ENCODE measurements at regions of chr11 and their contacts with region 1.

Region 1: GRCh38 chr11:6067502-6067901 is 36.9 kb upstream of the OR56A1 start:
- DNase-seq: no peak
- H3K4me3 ChIP-seq: no peak overlapping the region
- H3K27ac ChIP-seq: no peak overlapping the region
- H3K4me1 ChIP-seq: no peaks in the 10 kb centered on the region
- H3K27me3 ChIP-seq: no peaks in the 10 kb centered on the region
- CTCF ChIP-seq: no peak

Region 2: DNA sequence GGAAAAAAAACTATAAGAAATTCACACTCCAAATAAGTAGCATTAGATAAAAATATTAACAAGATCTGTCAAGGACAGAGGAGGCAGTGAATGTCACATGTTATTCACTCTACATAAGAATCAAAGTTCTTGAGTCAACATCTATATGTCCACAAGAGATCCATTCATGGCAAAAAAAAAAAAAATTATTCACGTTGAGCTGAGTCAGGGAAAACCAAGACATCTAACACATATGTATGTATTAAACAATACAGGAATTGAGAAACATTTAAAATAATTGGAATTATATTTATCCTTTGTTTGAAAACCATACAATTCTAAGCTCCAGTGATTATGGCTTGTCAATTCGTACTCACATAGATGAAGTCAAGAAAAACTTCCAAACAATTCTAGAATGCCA is 100.5 kb before region 1 on chr11:
- CTCF ChIA-PET with region 1: no interaction called
- POLR2A ChIA-PET with region 1: no interaction called
- intact Hi-C with region 1: no loop called
- DNase-seq: no peak
- H3K4me3 ChIP-seq: no peak overlapping the region
- H3K27ac ChIP-seq: no peak overlapping the region
- H3K4me1 ChIP-seq: no peaks in the 10 kb centered on the region
- H3K27me3 ChIP-seq: 0 out of 2 replicates have a peak, but pooled peaks cover 6% of the 10 kb centered on the region
- CTCF ChIP-seq: no peak

Region 3: GRCh38 chr11:6099577-6099976 is 32.1 kb after region 1 on chr11:
- CTCF ChIA-PET with region 1: no interaction called
- POLR2A ChIA-PET with region 1: interaction called, 12 read pairs
- intact Hi-C with region 1: no loop called
- DNase-seq: no peak
- H3K4me3 ChIP-seq: no peak overlapping the region
- H3K27ac ChIP-seq: no peak overlapping the region
- H3K4me1 ChIP-seq: no peaks in the 10 kb centered on the region
- H3K27me3 ChIP-seq: no peaks in the 10 kb centered on the region
- CTCF ChIP-seq: no peak

Measured in PC-9 (cell line).